ENCODE measurements at regions of chr6 and their contacts with region 1.

Region 1: DNA sequence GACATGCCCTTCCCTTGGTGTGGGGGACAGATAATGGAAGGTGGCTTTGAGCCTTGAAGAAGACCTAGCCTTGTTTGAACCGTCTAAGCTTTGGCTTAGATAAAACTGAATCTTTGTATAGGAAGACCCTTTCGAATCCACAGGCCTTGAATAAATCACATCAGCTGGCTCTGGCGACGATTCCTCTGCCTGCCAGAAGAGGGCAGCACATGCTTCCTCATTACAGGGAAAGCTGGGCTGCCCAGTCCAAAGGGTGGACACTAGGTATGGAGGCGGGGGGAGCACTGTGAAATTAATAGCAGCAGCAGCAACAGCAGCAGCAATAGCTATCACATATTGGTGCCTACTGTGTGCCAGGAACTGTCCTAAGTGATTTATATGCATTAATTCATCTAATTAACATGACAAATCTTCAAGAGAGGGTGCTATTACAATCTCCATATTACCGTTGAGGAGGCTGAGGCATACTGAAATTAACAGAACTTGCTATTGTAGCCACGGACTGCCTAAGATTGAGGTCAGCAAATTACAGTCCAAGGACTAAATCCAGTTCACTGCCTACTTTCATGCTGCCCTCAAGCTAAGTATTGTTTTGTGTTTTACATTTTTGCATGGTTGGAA is 85.1 kb downstream of the CLIC5 start:
- DNase-seq: peak; percentile 63
- ATAC-seq: peak; percentile 42
- H3K4me3 Mint-ChIP-seq: no peak overlapping the region
- H3K27ac Mint-ChIP-seq: no peak overlapping the region
- H3K4me1 Mint-ChIP-seq: peaks cover 2% of the 10 kb centered on the region
- H3K27me3 Mint-ChIP-seq: no peaks in the 10 kb centered on the region

Region 2: GRCh38 chr6:45866956-45867355 is 63.6 kb before region 1 on chr6:
- CTCF ChIA-PET with region 1: no interaction called
- POLR2A ChIA-PET with region 1: no interaction called
- DNase-seq: no peak
- ATAC-seq: no peak
- H3K4me3 Mint-ChIP-seq: no peak overlapping the region
- H3K27ac Mint-ChIP-seq: no peak overlapping the region
- H3K4me1 Mint-ChIP-seq: no peaks in the 10 kb centered on the region
- H3K27me3 Mint-ChIP-seq: peaks cover 15% of the 10 kb centered on the region

Region 3: DNA sequence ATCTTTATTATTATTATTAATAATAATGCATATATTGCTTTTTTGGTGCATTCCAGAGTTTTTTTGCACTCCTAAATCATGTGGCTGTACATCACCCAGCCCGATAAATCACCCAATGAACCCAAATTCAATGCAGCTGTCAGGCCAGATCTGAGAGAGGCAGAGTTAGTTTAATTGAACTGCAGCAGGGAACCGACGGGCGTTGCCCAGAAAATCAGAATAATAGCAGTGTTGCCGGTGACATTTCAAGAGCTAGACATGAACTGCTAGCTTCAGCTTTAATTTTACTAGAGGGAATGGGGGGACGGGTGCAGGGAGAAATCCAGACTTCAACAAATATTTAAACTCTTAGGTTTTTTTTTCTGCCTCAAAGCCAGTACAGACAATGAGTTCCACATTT is 49.9 kb before region 1 on chr6:
- CTCF ChIA-PET with region 1: no interaction called
- POLR2A ChIA-PET with region 1: no interaction called
- DNase-seq: no peak
- ATAC-seq: no peak
- H3K4me3 Mint-ChIP-seq: no peak overlapping the region
- H3K27ac Mint-ChIP-seq: no peak overlapping the region
- H3K4me1 Mint-ChIP-seq: no peaks in the 10 kb centered on the region
- H3K27me3 Mint-ChIP-seq: no peaks in the 10 kb centered on the region

Region 4: GRCh38 chr6:45942953-45943352 is 12.4 kb after region 1 on chr6:
- CTCF ChIA-PET with region 1: interaction called, 23 read pairs
- POLR2A ChIA-PET with region 1: no interaction called
- DNase-seq: no peak
- ATAC-seq: no peak
- H3K4me3 Mint-ChIP-seq: no peak overlapping the region
- H3K27ac Mint-ChIP-seq: no peak overlapping the region
- H3K4me1 Mint-ChIP-seq: peaks cover 9% of the 10 kb centered on the region
- H3K27me3 Mint-ChIP-seq: no peaks in the 10 kb centered on the region

Region 5: DNA sequence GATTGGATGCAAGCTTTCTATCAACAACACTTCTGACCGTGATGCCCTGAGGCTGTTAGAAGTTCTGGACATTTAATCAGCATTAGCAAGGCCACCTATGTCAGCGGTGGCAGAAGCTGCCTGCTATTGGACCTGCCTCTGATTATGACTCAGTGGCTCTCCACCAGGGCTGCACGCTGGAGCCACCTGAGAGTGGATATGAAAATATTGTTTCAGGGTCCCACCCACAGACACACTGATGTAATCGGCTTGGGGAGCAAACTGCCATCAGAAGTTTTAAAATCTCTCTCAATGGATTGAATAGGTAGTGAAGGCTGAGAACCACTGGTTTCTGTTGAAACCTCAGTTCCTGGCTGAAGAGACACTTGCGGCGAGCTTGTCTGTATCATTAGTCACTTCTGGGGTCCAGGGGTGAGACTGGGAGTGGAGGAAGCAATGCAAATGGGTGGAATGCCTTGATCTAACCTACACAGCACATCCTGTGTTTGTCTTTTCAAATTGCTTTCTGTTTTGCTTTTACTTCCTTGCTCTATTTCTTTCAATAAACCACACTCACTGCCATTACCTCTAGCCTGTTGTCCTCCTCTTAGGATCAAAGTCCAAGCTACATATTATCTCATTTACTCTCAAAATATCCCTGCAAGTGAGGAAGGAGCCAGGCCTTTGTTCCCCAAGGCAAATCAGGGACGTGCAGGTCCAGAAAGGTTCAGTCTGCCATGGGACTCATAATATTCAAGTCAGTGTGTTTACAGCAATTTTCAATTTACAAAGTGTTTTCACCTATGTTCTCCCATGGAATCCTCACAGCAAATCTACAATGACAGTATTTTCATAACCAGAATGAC is 80.9 kb after region 1 on chr6:
- CTCF ChIA-PET with region 1: interaction called, 16 read pairs
- POLR2A ChIA-PET with region 1: no interaction called
- DNase-seq: peak; percentile 86
- ATAC-seq: peak; percentile 93
- H3K4me3 Mint-ChIP-seq: peak overlapping the region; percentile 56
- H3K27ac Mint-ChIP-seq: peak overlapping the region; percentile 89
- H3K4me1 Mint-ChIP-seq: peaks cover 57% of the 10 kb centered on the region
- H3K27me3 Mint-ChIP-seq: peaks cover 7% of the 10 kb centered on the region

Region 6: DNA sequence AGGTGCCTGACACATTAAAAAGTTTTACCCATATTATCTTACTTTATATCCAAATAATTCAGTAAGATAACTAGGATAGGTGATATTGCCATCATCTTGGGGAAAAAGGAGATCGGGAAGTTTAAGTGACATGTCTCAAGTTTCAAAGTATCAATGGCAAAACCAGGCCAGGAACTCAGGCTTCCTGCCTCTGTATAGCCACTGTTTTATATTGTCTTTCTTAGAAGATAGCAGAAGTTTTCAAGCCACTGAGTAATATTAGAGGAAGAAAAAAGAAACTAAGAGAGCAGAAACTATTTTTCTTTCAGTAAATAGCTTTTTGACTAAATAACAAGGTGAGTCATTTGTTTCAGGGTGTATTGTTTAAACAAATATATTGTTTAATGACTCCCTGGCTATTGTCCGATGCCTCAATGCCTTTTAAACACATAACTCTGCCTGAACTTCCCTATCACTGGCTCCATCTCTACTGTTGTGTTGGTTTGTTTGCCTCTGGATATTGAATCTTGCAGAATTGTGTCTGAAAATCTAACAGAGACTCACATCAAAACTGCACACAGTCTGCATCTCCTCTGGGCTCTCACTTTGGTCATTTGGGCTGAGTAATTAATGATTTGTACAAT is 104.6 kb after region 1 on chr6:
- CTCF ChIA-PET with region 1: interaction called, 11 read pairs
- POLR2A ChIA-PET with region 1: no interaction called
- DNase-seq: no peak
- ATAC-seq: no peak
- H3K4me3 Mint-ChIP-seq: no peak overlapping the region
- H3K27ac Mint-ChIP-seq: no peak overlapping the region
- H3K4me1 Mint-ChIP-seq: no peaks in the 10 kb centered on the region
- H3K27me3 Mint-ChIP-seq: peaks cover 6% of the 10 kb centered on the region

Region 7: DNA sequence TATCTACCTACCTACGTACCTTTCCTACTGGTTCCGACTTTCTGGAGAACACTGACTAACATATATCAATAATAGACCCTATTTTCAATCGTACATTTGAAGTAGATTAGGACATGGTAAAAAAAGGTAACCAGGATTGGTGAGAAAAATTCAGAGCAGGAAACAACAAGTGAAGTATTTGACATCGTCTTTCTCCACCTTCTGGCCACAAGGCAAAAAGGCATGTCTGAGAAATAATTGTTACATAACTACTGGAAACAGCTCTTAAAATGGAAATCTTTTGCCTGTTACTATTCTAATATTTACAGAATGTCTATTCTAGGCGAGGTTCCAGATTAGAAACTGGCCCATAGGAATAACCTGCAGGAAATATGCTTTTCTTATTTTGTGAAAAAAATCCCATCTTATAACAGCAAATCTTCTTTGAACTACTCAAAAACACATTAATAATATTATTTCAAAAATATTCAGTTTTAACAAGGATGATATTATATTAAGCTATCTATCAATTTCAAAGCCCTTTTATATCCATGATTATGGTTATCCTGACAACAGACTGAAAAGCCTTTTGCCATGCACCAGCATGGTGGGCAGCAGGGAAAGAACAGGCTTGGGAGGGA is 479.9 kb after region 1 on chr6:
- CTCF ChIA-PET with region 1: interaction called, 12 read pairs
- POLR2A ChIA-PET with region 1: no interaction called
- DNase-seq: peak; percentile 26
- ATAC-seq: no peak
- H3K4me3 Mint-ChIP-seq: no peak overlapping the region
- H3K27ac Mint-ChIP-seq: no peak overlapping the region
- H3K4me1 Mint-ChIP-seq: no peaks in the 10 kb centered on the region
- H3K27me3 Mint-ChIP-seq: peaks cover 11% of the 10 kb centered on the region